AG04449 (cell line): ENCODE measurements at regions of chr5 and their contacts with region 1.

Region 1: GRCh38 chr5:154647114-154647760 is 107.9 kb upstream of the LARP1 start:
- DNase-seq: no peak
- H3K4me3 ChIP-seq: peak overlapping the region; percentile 29
- CTCF ChIP-seq: no peak

Region 2: GRCh38 chr5:153974131-153974812 is 673.0 kb before region 1 on chr5:
- CTCF ChIA-PET with region 1: interaction called, 18 read pairs
- POLR2A ChIA-PET with region 1: no interaction called
- DNase-seq: no peak
- H3K4me3 ChIP-seq: no peak overlapping the region
- CTCF ChIP-seq: peak; percentile 63

Region 3: DNA sequence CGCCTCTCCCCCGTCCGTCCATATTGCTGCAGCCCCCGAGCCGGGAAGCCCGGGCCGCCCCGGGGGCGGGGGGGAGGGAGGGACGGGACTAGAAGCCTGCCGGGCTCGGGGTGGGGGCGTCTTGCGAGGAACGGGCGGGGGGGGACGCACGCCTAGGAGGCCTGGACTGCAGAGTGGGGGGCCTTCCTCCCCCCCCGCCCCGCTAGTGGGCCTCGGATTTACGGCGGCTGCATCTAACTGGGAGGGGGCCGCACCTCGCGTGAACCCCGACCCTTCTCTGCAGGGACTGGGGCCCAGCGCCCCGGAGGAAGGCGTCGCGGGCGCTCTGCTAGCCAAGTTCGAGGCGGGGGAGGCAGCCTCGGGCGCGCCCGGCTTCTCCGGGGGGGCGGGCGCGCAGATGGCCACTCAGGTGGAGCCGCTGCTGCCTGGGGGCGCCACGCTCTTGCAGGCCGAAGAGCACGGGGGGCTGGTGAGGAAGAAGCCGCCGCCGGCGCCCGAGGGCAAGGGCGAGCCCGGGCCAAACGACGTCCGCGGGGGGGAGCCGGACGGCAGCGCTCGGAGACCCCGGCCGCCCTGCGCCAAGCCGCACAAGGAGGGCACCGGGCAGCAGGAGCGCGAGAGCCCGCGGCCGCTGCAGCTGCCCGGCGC is 108.2 kb after region 1 on chr5 and contains the start of gene LARP1:
- CTCF ChIA-PET with region 1: no interaction called
- POLR2A ChIA-PET with region 1: no interaction called
- DNase-seq: no peak
- H3K4me3 ChIP-seq: peak within 1 kb of the TSS; percentile 87
- CTCF ChIP-seq: no peak

Region 4: DNA sequence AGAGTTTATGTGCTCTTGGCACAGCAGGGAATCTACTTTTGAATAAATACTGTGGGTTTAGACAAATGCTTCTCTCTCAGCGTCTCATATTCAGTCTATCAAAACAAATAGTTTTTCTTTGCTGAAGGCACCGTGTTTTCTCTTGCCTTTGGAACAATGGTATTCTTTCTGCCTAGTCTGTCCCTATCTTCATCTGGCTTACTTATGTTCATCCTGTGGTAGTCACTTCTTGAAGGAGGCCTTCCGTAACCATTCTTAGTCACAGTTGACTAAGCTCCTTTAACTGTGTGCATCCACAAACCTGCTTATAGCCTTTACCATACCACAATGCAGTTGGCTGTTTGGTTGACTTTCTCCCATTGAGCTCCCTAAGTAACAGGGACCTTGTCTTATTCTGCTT is 153.8 kb after region 1 on chr5:
- CTCF ChIA-PET with region 1: interaction called, 103 read pairs
- POLR2A ChIA-PET with region 1: no interaction called
- DNase-seq: peak; percentile 23
- H3K4me3 ChIP-seq: no peak overlapping the region
- CTCF ChIP-seq: no peak

Region 5: GRCh38 chr5:154811653-154812365 is 164.6 kb after region 1 on chr5:
- CTCF ChIA-PET with region 1: interaction called, 103 read pairs
- POLR2A ChIA-PET with region 1: no interaction called
- DNase-seq: no peak
- H3K4me3 ChIP-seq: no peak overlapping the region
- CTCF ChIP-seq: peak; percentile 77

Region 6: DNA sequence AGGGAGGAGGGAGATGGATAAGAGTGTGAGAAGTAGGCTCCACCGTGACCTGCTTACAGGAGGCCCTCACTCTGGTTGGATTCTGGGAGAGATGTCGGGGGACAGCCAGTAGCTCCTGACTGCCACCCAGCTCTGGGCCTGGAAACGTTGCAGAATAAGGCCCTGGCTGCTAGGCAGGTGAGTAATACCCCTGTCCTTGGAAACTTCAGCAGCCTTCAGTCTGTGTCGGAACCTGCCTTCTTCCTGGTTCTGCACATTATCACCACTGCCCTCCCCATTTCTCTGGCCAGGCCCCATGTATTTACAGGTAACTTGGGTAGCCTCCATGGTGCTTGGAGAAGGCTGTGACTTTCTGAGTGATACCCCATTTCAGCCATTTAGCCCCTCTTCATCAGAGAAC is 176.4 kb after region 1 on chr5:
- CTCF ChIA-PET with region 1: interaction called, 12 read pairs
- POLR2A ChIA-PET with region 1: no interaction called
- DNase-seq: no peak
- H3K4me3 ChIP-seq: no peak overlapping the region
- CTCF ChIP-seq: no peak